AG04450 (cell line): ENCODE measurements at regions of chr20 and their contacts with region 1.

Region 1: GRCh38 chr20:52076164-52076563 is 115.4 kb downstream of the ZFP64 start:
- DNase-seq: no peak
- H3K4me3 ChIP-seq: no peak overlapping the region
- H3K27ac ChIP-seq: no peak overlapping the region
- H3K27me3 ChIP-seq: no peaks in the 10 kb centered on the region
- CTCF ChIP-seq: no peak

Region 2: DNA sequence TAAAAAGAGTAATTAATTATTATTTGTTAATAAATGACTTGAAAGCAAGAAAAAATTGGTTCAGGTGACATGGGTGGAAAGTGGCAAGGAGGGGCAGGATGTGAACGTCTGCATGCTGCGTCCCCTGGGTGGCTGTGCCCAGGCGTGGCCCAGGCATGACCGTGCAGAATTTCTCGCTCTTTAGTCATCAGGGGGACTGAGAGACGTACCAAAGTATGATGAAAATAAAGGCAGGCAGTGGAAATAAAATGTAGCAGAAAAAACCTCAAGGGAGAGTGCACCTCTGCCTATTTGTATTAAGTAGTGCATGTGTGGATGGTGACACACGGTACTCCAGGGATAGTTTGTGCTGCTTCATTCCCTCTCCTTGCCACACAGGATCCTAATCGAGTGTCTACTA is 389.1 kb before region 1 on chr20:
- CTCF ChIA-PET with region 1: interaction called, 10 read pairs
- POLR2A ChIA-PET with region 1: no interaction called
- DNase-seq: no peak
- H3K4me3 ChIP-seq: no peak overlapping the region
- H3K27ac ChIP-seq: no peak overlapping the region
- H3K27me3 ChIP-seq: no peaks in the 10 kb centered on the region
- CTCF ChIP-seq: no peak

Region 3: DNA sequence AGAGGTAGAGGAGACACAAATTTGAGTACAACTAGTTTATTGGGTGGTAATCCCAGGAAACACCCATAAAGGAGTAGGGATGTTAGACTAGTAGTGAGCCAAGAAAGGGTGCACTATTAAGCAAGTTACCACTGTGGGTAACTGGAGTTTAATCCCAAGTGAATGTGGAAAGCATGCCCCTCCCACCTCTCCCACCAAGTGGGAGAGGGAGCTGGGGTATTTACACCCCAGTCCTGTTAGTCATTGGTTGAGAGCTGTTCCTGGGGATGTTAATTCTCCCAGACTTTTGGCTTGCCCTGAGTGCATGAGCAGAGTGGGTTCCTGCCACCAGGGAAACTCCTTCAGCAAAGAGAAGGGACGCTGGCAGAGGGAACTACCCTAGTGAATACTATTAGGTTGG is 164.6 kb after region 1 on chr20:
- CTCF ChIA-PET with region 1: interaction called, 14 read pairs
- POLR2A ChIA-PET with region 1: no interaction called
- DNase-seq: no peak
- H3K4me3 ChIP-seq: no peak overlapping the region
- H3K27ac ChIP-seq: no peak overlapping the region
- H3K27me3 ChIP-seq: no peaks in the 10 kb centered on the region
- CTCF ChIP-seq: no peak